ENCODE measurements at regions of chr3 and their contacts with region 1.

Region 1: DNA sequence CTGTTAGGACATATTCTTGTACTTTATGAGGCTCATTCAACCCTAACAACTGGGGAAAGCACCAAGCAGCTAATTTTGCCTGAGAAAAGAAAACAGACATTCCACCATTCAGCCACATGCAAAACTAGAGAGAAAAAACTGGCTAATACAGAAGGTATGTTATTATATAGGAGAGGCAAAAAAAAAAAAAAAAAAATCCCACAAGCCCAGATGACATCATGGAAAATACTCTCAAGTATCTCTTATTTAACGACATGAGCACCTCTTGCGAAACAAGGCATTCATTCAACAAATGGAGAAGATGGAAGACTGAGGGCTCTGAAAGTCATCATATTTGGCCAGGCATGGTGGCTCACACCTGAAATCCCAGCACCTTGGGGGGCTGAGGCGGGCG is 61.5 kb downstream of the PRICKLE2 start:
- DNase-seq: no peak
- ATAC-seq: no peak
- H3K4me3 ChIP-seq: no peak overlapping the region
- H3K27ac ChIP-seq: no peak overlapping the region
- H3K4me1 ChIP-seq: peaks cover 2 to 6% of the 10 kb centered on the region in 2 donors
- H3K27me3 ChIP-seq: no peaks in the 10 kb centered on the region

Region 2: GRCh38 chr3:63872135-63872903 is 291.4 kb before region 1 on chr3:
- intact Hi-C with region 1: no loop called
- DNase-seq: no peak
- ATAC-seq: no peak
- H3K4me3 ChIP-seq: no peak overlapping the region
- H3K27ac ChIP-seq: no peak overlapping the region
- H3K4me1 ChIP-seq: peaks cover under 1 to 10% of the 10 kb centered on the region in 2 donors
- H3K27me3 ChIP-seq: no peaks in the 10 kb centered on the region

Region 3: GRCh38 chr3:64213962-64214379 is 50.2 kb after region 1 on chr3:
- intact Hi-C with region 1: loop called in 1 of 2 experiments (anchors 10 kb)
- DNase-seq: peak; percentile 87
- ATAC-seq: peak; percentile 80
- H3K4me3 ChIP-seq: peak overlapping the region; percentile 41 to 63
- H3K27ac ChIP-seq: peak overlapping the region in 1 of 2 donors; percentile 81
- H3K4me1 ChIP-seq: peaks cover 6 to 11% of the 10 kb centered on the region in 2 donors
- H3K27me3 ChIP-seq: no peaks in the 10 kb centered on the region